ENCODE measurements at regions of chr7 and their contacts with region 1.

Region 1: DNA sequence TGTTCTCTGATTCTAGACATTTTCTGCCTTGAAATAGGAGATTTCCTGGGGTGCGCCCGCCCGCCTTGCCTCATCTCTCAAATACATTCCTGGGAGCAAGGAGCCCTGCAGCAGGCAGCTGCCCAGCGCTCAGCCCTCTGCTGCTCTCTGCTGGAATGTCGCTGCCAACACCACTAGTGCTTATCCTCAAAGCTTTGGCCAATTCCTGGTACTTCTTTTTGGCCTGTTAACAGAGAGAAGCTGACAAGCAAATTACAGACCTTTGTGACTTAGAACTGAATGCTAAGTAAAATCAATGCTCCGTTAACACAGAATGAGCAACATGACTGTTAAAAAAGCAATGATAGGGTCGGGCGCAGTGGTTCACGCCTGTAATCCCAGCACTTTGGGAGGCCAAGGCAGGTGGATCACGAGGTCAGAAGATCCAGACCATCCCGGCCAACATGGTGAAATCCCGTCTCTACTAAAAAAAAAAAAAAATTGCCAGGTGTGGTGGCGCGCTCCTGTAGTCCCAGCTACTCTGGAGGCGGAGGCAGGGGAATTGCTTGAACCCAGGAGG is 41.9 kb upstream of the SYPL1 start:
- DNase-seq: peak; percentile 77
- ATAC-seq: peak; percentile 94
- H3K4me3 Mint-ChIP-seq: no peak overlapping the region
- H3K27ac Mint-ChIP-seq: no peak overlapping the region
- H3K4me1 Mint-ChIP-seq: peaks cover 16% of the 10 kb centered on the region
- H3K27me3 Mint-ChIP-seq: peaks cover 32% of the 10 kb centered on the region

Region 2: DNA sequence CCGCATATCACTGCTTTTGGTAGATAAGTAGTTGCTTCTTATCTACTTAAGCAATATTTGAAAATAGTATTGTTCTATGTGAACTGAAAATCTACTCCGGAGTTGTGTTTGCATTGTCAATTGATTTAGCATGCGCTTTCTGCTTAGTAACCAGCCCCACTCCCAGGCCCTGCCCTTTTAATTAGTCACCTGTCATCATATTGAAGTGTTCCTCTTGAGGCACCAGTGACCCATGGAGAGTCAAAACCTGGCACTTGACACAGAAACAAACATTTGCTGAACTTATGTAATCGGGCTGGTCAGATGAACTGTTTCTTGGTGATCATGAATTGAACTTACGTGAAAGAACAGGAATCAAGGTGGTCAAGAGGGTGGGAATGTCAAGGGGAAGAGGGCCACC is 218.7 kb before region 1 on chr7:
- CTCF ChIA-PET with region 1: no interaction called
- POLR2A ChIA-PET with region 1: no interaction called
- DNase-seq: no peak
- ATAC-seq: no peak
- H3K4me3 Mint-ChIP-seq: no peak overlapping the region
- H3K27ac Mint-ChIP-seq: no peak overlapping the region
- H3K4me1 Mint-ChIP-seq: no peaks in the 10 kb centered on the region
- H3K27me3 Mint-ChIP-seq: peaks cover 7% of the 10 kb centered on the region

Region 3: DNA sequence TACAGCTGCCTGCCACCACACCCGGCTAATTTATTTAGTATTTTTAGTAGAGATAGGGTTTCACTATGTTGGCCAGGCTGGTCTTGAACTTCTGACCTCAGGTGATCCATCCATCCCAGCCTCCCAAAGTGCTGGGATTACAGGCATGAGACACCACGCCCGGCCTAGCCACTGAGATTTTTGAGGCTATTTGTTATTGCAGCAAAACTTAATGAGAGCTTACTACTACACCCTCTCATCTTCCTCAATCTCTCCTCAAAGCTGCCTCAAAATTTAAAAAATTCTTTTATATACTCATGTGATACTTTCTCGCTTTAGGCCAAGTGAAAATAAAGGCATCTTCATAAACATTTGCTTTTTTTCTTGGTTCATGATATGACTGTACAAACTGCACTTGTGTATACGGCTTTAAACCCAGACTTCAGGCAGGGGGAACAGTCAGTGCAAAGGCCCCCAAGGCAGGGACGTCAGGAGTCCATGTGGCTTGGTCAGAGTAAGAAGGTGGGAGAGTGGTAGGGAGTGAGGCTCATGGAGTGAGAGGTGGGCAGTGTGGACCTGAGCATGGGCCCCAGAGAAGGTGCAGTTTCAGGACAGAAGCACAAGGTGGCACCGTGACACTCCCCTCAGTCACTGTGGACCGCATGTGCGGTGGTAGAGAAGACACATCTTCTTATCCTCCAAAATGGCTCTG is 97.3 kb before region 1 on chr7:
- CTCF ChIA-PET with region 1: interaction called, 201 read pairs
- POLR2A ChIA-PET with region 1: no interaction called
- DNase-seq: peak; percentile 78
- ATAC-seq: peak; percentile 98
- H3K4me3 Mint-ChIP-seq: no peak overlapping the region
- H3K27ac Mint-ChIP-seq: no peak overlapping the region
- H3K4me1 Mint-ChIP-seq: peaks cover 35% of the 10 kb centered on the region
- H3K27me3 Mint-ChIP-seq: peaks cover 2% of the 10 kb centered on the region

Region 4: DNA sequence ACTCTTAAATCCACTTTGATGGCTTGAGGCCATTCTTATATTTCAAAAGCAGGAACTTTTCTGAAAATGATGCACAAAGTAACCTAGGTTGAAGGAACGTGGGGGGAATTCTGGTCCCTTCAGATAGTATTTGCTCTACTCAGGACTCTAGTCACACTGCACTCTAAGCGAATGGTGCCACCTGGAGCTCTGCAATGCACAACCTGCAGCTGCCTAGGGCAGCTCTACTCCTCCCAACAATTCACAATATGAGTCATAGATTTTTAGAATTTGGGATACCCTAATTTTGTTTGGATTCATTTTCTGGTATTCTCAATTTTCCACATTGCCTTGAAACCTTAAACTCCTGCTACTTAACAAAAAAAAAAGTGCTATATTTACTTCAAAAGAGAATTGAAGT is 59.2 kb before region 1 on chr7:
- CTCF ChIA-PET with region 1: interaction called, 11 read pairs
- POLR2A ChIA-PET with region 1: no interaction called
- DNase-seq: no peak
- ATAC-seq: no peak
- H3K4me3 Mint-ChIP-seq: no peak overlapping the region
- H3K27ac Mint-ChIP-seq: no peak overlapping the region
- H3K4me1 Mint-ChIP-seq: peaks cover 14% of the 10 kb centered on the region
- H3K27me3 Mint-ChIP-seq: no peaks in the 10 kb centered on the region

Region 5: DNA sequence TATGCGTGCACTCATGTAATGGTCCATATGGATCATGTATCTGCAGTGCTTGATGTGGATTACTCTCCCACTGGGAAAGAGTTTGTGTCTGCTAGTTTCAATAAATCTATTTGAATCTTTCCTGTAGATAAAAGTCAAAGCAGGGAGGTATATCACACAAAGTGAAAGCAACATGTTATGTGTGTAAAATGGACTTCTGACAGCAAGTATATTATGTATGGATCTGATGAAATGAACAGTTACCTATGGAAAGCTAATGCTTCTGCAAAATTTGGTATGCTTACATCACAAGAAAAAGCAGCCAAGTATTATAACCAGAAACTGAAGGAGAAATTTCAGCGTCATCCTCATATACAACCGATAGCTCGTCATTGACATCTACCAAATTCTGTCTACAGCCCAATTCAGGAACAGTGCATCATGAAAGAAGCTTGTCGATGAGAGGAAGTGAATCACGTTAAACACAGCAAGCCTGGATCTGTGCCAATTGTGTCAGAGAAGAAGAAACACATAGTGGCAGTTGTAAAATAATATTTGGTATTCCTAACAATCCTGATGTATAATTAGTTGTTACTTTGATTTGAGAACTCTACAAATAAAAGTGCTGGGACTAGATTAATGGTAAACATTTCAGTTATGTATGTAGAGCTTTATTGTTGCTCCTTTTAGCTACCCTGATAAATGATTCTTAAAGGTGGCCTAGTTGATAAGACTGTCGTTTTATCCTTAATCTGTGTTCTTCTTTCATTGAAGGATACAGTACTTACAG is 27.6 kb before region 1 on chr7:
- CTCF ChIA-PET with region 1: interaction called, 19 read pairs
- POLR2A ChIA-PET with region 1: no interaction called
- DNase-seq: peak; percentile 55
- ATAC-seq: no peak
- H3K4me3 Mint-ChIP-seq: peak overlapping the region; percentile 24
- H3K27ac Mint-ChIP-seq: no peak overlapping the region
- H3K4me1 Mint-ChIP-seq: peaks cover 7% of the 10 kb centered on the region
- H3K27me3 Mint-ChIP-seq: peaks cover 16% of the 10 kb centered on the region

Region 6: DNA sequence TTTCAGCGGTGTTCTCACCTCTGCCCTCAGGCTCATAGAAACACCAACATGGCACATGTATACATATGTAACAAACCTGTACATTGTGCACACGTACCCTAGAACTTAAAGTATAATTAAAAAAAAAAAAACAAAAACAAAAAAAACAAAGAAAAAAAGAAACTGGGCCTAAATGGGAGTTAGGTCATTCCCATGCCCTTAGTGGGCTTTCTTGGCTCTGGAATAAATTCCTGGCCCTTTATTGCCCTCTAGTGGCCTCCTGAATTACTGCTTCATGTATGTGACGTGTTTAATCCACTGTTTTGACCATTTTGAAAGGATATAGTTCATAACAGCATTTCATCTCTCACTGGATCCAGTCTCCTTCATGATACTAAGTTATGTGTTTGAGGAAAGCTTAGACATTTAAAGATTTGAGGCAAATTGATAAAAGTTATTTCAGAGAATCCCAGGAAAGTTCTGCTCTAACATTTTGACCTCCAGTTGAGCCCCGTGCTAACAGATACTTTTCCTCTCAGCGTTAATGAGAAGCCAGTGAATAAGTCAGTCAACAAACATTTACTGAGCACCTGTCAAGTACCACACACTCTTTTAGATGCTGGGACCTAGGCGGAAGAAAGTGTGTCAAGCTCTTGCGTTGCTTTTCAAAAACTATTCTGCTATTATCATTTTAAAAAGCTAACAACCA is 12.8 kb after region 1 on chr7:
- CTCF ChIA-PET with region 1: interaction called, 71 read pairs
- POLR2A ChIA-PET with region 1: no interaction called
- DNase-seq: peak; percentile 57
- ATAC-seq: no peak
- H3K4me3 Mint-ChIP-seq: no peak overlapping the region
- H3K27ac Mint-ChIP-seq: no peak overlapping the region
- H3K4me1 Mint-ChIP-seq: no peaks in the 10 kb centered on the region
- H3K27me3 Mint-ChIP-seq: peaks cover 17% of the 10 kb centered on the region

Measured in activated CD8-positive, alpha-beta T cell treated with anti-CD3 and anti-CD28 coated beads, Interleukin-2, amount 10 ng/mL, durations not matched to agents 7 days and 5 days (primary cell).